Left colon (tissue), 2 donors: ENCODE measurements at regions of chr1 and their contacts with region 1.

Region 1: DNA sequence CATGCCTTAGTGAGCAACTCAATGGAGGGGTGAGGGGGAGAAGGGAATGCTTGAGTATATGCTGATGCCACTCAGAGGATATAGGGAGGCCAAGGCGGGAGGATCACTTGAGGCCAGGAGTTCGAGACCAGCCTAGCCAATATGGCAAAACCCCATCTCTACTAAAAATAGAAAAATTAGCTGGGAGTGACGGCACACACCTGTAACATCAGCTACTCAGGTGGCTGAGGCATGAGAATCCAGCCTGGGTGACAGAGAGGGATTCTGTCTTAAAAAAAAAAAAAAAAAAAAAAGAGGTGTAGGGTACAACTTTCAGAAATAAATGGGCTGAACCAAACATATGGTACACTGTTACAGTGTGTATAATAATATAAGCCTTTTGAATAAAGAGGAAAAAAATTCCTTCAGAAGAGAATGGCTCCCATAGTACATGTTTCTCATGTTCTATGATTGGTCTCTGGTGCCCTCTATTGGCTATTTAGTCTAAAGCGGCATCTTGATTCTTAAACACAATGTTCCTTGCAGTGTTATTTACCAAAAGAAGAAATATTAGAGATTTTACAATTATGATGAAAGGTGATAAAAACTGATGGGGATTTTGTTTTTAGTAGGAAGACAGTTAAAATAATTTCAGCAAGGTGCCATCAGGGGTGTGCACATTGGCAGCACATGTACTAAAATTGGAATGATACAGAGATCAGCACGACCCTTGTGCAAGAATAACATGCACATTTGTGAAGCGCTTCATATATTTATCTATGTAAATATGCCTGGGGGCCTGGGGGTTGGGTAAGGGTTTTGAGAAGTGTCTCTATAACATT is 109.8 kb downstream of the PATJ start:
- DNase-seq: no peak
- ATAC-seq: peak; percentile 71

Region 2: GRCh38 chr1:59971464-59971911 is 1880.6 kb before region 1 on chr1:
- intact Hi-C with region 1: loop called in 1 of 2 experiments (anchors 10 kb)
- DNase-seq: peak; percentile 62 to 77
- ATAC-seq: peak; percentile 86

Region 3: GRCh38 chr1:60969971-60970509 is 882.0 kb before region 1 on chr1:
- intact Hi-C with region 1: loop called in 1 of 2 experiments (anchors 5 kb)
- DNase-seq: no peak
- ATAC-seq: peak; percentile 64

Region 4: DNA sequence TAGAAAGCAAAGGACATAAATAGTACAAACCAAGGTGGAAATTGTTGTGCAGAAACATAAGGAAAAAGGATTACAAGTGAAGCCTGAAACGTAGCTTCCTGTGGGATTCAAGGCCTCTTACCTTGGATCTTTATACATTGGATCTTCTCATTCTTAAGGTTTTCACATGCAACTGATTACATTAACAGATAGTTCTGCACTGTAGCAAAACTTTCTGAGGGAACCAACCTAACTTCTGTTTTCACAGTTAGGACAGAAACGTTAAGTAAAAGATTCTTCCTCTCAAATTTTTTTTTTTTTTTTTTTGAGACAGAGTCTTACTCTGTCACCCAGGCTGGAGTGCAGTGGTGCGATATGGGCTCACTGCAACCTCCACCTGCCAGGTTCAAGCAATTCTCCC is 119.3 kb before region 1 on chr1:
- intact Hi-C with region 1: no loop called
- DNase-seq: no peak
- ATAC-seq: peak; percentile 21

Region 5: GRCh38 chr1:61742620-61743430 is 109.2 kb before region 1 on chr1:
- intact Hi-C with region 1: no loop called
- DNase-seq: peak in 1 of 2 donors; percentile 34
- ATAC-seq: peak; percentile 62

Region 6: DNA sequence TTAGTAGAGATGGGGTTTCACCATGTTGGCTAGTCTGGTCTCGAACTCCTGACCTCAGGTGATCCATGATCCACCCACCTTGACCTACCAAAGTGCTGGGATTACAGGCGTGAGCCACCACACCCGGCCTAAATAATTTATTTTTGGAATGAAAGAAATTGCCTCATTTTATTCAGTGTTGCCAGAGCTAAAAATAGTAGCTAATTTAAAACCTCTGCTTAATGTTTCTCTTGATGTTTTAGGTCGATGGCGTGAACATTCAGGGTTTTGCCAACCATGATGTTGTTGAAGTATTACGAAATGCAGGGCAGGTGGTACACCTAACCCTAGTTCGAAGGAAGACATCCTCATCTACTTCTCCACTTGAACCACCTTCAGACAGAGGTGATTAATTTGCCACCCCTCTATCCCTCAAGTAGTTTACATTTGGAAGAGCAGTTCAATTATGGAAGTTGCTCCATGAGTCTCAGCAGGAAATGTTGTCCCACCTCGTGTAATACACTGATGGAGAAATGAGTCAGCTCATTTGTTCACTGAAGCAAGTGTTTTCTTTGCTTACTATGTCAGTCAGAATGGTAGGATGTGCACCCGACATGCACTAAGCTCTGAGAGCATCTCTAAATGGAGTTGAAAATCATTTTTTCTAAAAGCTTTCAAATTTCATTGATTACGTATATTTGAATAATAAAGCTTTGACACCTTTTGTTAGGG is 54.9 kb before region 1 on chr1:
- intact Hi-C with region 1: no loop called
- DNase-seq: no peak
- ATAC-seq: no peak

Region 7: GRCh38 chr1:61914823-61915482 is 62.9 kb after region 1 on chr1:
- intact Hi-C with region 1: no loop called
- DNase-seq: no peak
- ATAC-seq: no peak